B cell (primary cell): ENCODE measurements at regions of chr16 and their contacts with region 1.

Region 1: DNA sequence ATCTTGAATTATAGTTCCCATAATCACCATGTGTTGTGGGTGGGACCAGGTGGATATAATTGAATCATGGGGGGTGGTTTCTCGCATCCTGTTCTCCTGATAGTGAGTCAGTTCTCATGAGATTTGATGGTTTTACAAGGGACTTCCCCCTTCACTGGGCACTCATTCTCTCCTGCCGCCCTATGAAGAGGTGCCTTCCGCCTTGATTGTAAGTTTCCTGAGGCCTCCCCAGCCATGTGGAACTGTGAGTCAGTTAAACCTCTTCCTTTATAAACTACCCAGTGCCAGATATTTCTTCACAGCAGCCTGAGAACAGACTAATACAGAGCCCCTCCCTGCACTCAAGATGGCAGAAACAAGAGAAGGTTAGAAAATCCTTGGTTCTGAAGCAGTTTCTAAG is 26.4 kb downstream of the LDAF1 start:
- DNase-seq: peak; percentile 48
- ATAC-seq: peak; percentile 47
- H3K4me3 ChIP-seq: no peak overlapping the region
- H3K4me3 Mint-ChIP-seq: no peak overlapping the region
- H3K27ac ChIP-seq: peak overlapping the region; percentile 8 to 12
- H3K27ac Mint-ChIP-seq: peak overlapping the region; percentile 82
- H3K4me1 ChIP-seq: peaks cover 7 to 15% of the 10 kb centered on the region in 2 donors
- H3K4me1 Mint-ChIP-seq: peaks cover 19% of the 10 kb centered on the region
- H3K27me3 ChIP-seq: no peaks in the 10 kb centered on the region
- H3K27me3 Mint-ChIP-seq: no peaks in the 10 kb centered on the region
- CTCF ChIP-seq: no peak

Region 2: DNA sequence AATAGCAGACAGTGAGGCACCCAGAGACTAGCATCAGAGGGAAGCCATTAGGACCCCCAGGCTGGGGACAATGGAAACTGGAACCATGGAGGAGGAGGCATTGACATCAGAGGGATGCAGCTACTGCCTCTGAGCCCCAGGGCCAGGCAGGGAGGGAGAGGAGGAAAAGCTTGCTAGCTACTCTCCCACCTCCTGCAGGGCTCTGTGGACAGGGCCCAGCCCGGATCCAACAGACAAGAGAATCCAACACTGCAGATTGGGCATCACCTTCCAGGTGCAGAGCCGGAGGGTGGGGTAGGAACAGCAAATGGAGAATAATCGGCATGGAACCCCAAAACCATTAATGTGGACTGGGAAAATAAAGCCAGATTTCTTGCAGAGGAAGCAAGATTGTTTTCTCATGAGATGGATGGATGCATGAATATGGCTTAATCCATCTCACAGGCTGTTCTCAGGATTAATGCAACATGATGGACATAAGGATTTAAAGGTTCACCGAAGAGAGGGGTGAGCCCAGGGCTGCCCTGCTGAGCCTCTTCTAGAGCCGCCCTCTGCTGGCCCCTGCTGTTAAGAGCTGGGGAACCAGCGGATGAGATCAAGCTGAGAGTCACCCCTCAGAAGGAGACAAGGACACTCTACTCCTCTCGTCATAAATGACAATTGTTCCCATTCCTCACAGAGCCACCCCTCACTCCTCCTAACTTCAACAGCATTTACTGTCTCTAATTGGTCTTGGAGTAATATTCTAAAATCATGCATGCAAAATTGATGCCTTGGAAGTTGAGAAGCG is 83.0 kb before region 1 on chr16:
- CTCF ChIA-PET with region 1: no interaction called
- POLR2A ChIA-PET with region 1: no interaction called
- intact Hi-C with region 1: no loop called
- DNase-seq: peak; percentile 21
- ATAC-seq: no peak
- H3K4me3 ChIP-seq: no peak overlapping the region
- H3K4me3 Mint-ChIP-seq: no peak overlapping the region
- H3K27ac ChIP-seq: no peak overlapping the region
- H3K27ac Mint-ChIP-seq: no peak overlapping the region
- H3K4me1 ChIP-seq: no peaks in the 10 kb centered on the region
- H3K4me1 Mint-ChIP-seq: no peaks in the 10 kb centered on the region
- H3K27me3 ChIP-seq: peaks cover 0 to 11% (median 5%) of the 10 kb centered on the region in 4 experiments
- H3K27me3 Mint-ChIP-seq: peaks cover 41% of the 10 kb centered on the region
- CTCF ChIP-seq: no peak

Region 3: GRCh38 chr16:21134053-21134452 is 50.8 kb before region 1 on chr16:
- CTCF ChIA-PET with region 1: no interaction called
- POLR2A ChIA-PET with region 1: no interaction called
- intact Hi-C with region 1: no loop called
- DNase-seq: no peak
- ATAC-seq: no peak
- H3K4me3 ChIP-seq: no peak overlapping the region
- H3K4me3 Mint-ChIP-seq: no peak overlapping the region
- H3K27ac ChIP-seq: no peak overlapping the region
- H3K27ac Mint-ChIP-seq: no peak overlapping the region
- H3K4me1 ChIP-seq: no peaks in the 10 kb centered on the region
- H3K4me1 Mint-ChIP-seq: no peaks in the 10 kb centered on the region
- H3K27me3 ChIP-seq: peaks cover 0 to 3% (median 0%) of the 10 kb centered on the region in 4 experiments
- H3K27me3 Mint-ChIP-seq: peaks cover 8% of the 10 kb centered on the region
- CTCF ChIP-seq: no peak

Region 4: DNA sequence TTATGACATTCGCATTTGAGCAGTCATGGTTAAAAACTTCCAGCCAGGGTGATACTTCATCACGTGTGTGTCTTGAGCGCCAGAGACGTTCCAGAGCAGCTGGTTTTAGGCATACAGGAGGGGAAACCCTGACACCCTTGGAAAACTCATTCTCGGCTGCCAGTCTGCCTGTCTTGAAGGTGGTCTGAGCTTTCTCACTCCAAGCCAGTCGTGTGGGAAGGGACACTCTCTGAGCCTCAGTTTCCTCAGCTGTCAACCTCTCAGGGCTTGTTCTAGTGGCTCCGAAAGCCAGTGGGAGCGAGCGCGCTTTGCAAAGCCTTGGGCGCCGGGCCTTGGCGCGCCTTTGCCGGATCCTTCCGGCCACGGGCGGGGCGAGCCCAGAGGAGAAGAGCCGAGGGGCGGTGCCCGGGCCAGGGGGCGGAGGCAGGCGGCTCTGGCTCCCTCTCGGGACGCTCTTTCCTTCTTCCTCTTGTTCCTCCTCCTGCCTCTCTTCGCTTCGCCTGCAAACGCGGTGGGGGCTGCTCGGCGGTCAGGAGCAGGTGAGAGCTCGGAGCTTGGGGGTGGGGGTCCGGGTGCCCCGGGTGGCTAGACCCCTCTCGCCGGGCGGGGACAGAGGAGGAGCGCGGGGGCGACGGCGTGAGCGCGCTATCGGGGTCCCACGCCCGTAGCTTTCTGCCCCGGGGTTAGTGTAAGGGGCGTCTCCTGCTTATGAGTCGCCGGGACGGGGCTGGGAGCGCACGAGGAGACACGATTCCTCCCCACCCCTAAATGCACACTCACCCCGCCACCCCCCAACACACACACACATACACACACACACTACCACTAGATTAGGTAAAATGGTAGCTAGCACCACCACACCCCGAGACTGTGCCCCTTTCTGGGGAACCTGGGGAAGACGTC is 26.4 kb before region 1 on chr16 and contains the start of gene LDAF1:
- CTCF ChIA-PET with region 1: interaction called, 18 read pairs
- POLR2A ChIA-PET with region 1: no interaction called
- intact Hi-C with region 1: loop called (anchors 1 kb)
- DNase-seq: peak; percentile 82
- ATAC-seq: peak; percentile 90
- H3K4me3 ChIP-seq: peak within 1 kb of the TSS; percentile 71 to 93 (median 85)
- H3K4me3 Mint-ChIP-seq: peak within 1 kb of the TSS; percentile 96
- H3K27ac ChIP-seq: peak within 1 kb of the TSS; percentile 14 to 46
- H3K27ac Mint-ChIP-seq: peak within 1 kb of the TSS; percentile 88
- H3K4me1 ChIP-seq: peaks cover 13 to 18% of the 10 kb centered on the region in 2 donors
- H3K4me1 Mint-ChIP-seq: peaks cover 22% of the 10 kb centered on the region
- H3K27me3 ChIP-seq: no peaks in the 10 kb centered on the region
- H3K27me3 Mint-ChIP-seq: no peaks in the 10 kb centered on the region
- CTCF ChIP-seq: no peak
- total RNA-seq, gene LDAF1: 21.1 and 21.9 TPM in 2 replicates

Region 5: GRCh38 chr16:21197112-21197511 is 12.3 kb after region 1 on chr16:
- CTCF ChIA-PET with region 1: interaction called, 14 read pairs
- POLR2A ChIA-PET with region 1: no interaction called
- intact Hi-C with region 1: no loop called
- DNase-seq: no peak
- ATAC-seq: no peak
- H3K4me3 ChIP-seq: no peak overlapping the region
- H3K4me3 Mint-ChIP-seq: no peak overlapping the region
- H3K27ac ChIP-seq: no peak overlapping the region
- H3K27ac Mint-ChIP-seq: no peak overlapping the region
- H3K4me1 ChIP-seq: peaks cover 12% of the 10 kb centered on the region in 2 donors
- H3K4me1 Mint-ChIP-seq: peaks cover 17% of the 10 kb centered on the region
- H3K27me3 ChIP-seq: peaks cover 0 to 7% (median 4%) of the 10 kb centered on the region in 4 experiments
- H3K27me3 Mint-ChIP-seq: peaks cover 25% of the 10 kb centered on the region
- CTCF ChIP-seq: no peak

Region 6: GRCh38 chr16:21277927-21278706 is 93.3 kb after region 1 on chr16 and contains the start of gene CRYM:
- CTCF ChIA-PET with region 1: interaction called, 65 read pairs
- POLR2A ChIA-PET with region 1: no interaction called
- intact Hi-C with region 1: no loop called
- DNase-seq: peak; percentile 83
- ATAC-seq: peak; percentile 95
- H3K4me3 ChIP-seq: peak within 1 kb of the TSS in 4 of 5 experiments; percentile 46 to 68 (median 56)
- H3K4me3 Mint-ChIP-seq: peak within 1 kb of the TSS; percentile 87
- H3K27ac ChIP-seq: no peak within 1 kb of the TSS
- H3K27ac Mint-ChIP-seq: no peak within 1 kb of the TSS
- H3K4me1 ChIP-seq: peaks cover 34 to 36% of the 10 kb centered on the region in 2 donors
- H3K4me1 Mint-ChIP-seq: peaks cover 39% of the 10 kb centered on the region
- H3K27me3 ChIP-seq: peaks cover 0 to 17% (median 5%) of the 10 kb centered on the region in 4 experiments
- H3K27me3 Mint-ChIP-seq: peaks cover 17% of the 10 kb centered on the region
- CTCF ChIP-seq: peak; percentile 94
- total RNA-seq, gene CRYM: 5.1 and 8.2 TPM in 2 replicates

Region 7: GRCh38 chr16:21300309-21301167 is 115.7 kb after region 1 on chr16:
- CTCF ChIA-PET with region 1: interaction called, 25 read pairs
- POLR2A ChIA-PET with region 1: interaction called, 4 read pairs
- intact Hi-C with region 1: loop called (anchors 1 kb)
- DNase-seq: peak; percentile 69
- ATAC-seq: peak; percentile 43
- H3K4me3 ChIP-seq: peak overlapping the region; percentile 51 to 85 (median 65)
- H3K4me3 Mint-ChIP-seq: peak overlapping the region; percentile 97
- H3K27ac ChIP-seq: no peak overlapping the region
- H3K27ac Mint-ChIP-seq: peak overlapping the region; percentile 86
- H3K4me1 ChIP-seq: peaks cover 12 to 26% of the 10 kb centered on the region in 2 donors
- H3K4me1 Mint-ChIP-seq: peaks cover 28% of the 10 kb centered on the region
- H3K27me3 ChIP-seq: no peaks in the 10 kb centered on the region
- H3K27me3 Mint-ChIP-seq: no peaks in the 10 kb centered on the region
- CTCF ChIP-seq: no peak

Region 8: DNA sequence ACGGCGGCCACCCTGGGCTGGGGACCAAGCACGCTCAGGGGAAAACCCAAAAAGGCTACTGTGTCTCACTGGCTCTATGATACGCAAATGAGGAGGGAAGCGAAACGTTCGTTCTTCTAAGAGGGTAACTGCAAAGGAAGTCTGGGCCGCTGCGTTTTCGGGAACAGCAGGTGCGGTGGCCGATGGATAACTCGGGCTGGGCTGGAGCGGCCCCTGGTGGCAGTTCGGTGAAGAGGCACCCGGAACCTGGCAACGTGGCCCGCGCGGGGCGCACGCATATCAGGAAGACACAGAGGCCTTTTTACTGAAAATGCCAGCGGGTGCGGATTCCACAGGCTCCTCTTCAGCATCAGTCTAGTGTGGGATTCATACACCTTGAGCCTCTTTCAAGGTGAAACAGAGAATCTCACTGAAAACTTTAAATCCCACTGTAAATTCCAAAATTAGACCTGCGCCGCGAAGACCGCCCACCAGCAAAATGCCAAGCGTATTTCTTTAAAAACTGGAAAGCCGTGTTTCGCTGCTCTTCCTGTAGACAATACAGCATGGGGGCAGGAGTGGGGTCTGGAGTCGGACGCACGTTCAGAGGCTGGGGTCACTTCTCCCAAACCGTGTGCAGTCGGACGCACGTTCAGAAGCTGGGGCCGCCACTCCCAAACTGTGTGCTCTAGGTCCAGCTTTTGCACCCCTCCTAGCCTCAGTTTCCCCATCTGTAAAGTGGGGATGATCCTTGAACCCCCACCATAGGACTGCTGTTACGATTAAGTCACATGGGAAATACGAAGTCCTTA is 370.2 kb after region 1 on chr16:
- CTCF ChIA-PET with region 1: interaction called, 29 read pairs
- POLR2A ChIA-PET with region 1: interaction called, 3 read pairs
- intact Hi-C with region 1: loop called (anchors 1 kb)
- DNase-seq: peak; percentile 100
- ATAC-seq: peak; percentile 98
- H3K4me3 ChIP-seq: peak overlapping the region in 4 of 5 experiments; percentile 15 to 46 (median 34)
- H3K4me3 Mint-ChIP-seq: peak overlapping the region; percentile 84
- H3K27ac ChIP-seq: peak overlapping the region; percentile 70 to 72
- H3K27ac Mint-ChIP-seq: peak overlapping the region; percentile 94
- H3K4me1 ChIP-seq: peaks cover 27 to 34% of the 10 kb centered on the region in 2 donors
- H3K4me1 Mint-ChIP-seq: peaks cover 27% of the 10 kb centered on the region
- H3K27me3 ChIP-seq: no peaks in the 10 kb centered on the region
- H3K27me3 Mint-ChIP-seq: no peaks in the 10 kb centered on the region
- CTCF ChIP-seq: peak; percentile 100

Region 9: DNA sequence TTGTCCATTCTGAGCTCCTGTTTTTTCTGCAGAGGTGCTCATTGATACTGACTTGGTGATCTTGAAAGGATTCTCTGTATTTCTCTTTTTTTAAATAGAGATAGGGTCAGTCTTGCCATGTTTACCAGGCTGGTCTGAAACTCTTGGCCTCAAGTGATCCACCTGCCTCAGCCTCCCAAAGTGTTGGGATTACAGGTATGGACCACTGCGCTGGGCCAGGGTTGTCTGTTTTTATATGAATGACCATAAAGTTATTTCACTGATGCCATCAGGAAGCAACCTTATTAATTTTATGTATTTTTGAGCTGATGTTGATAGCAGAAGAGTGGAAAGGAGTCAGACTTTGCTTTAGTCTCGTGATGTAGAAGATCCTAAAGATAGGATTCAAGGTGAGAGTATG is 378.8 kb after region 1 on chr16:
- CTCF ChIA-PET with region 1: interaction called, 13 read pairs
- POLR2A ChIA-PET with region 1: interaction called, 4 read pairs
- intact Hi-C with region 1: no loop called
- DNase-seq: no peak
- ATAC-seq: no peak
- H3K4me3 ChIP-seq: no peak overlapping the region
- H3K4me3 Mint-ChIP-seq: no peak overlapping the region
- H3K27ac ChIP-seq: no peak overlapping the region
- H3K27ac Mint-ChIP-seq: no peak overlapping the region
- H3K4me1 ChIP-seq: peaks cover 5 to 6% of the 10 kb centered on the region in 2 donors
- H3K4me1 Mint-ChIP-seq: peaks cover 3% of the 10 kb centered on the region
- H3K27me3 ChIP-seq: no peaks in the 10 kb centered on the region
- H3K27me3 Mint-ChIP-seq: no peaks in the 10 kb centered on the region
- CTCF ChIP-seq: no peak